CD4-positive, alpha-beta T cell (primary cell): ENCODE measurements at regions of chr17 and their contacts with region 1.

Region 1: GRCh38 chr17:45148183-45149036 is at the start of gene HEXIM1:
- DNase-seq: peak; percentile 98 to 100 (median 99)
- ATAC-seq: peak; percentile 78
- H3K4me3 ChIP-seq: peak within 1 kb of the TSS; percentile 94
- H3K4me3 Mint-ChIP-seq: peak within 1 kb of the TSS; percentile 94
- H3K27ac ChIP-seq: peak within 1 kb of the TSS; percentile 93 to 97
- H3K27ac Mint-ChIP-seq: peak within 1 kb of the TSS; percentile 99
- H3K4me1 ChIP-seq: peaks cover 71% of the 10 kb centered on the region
- H3K4me1 Mint-ChIP-seq: peaks cover 69% of the 10 kb centered on the region
- H3K27me3 ChIP-seq: no peaks in the 10 kb centered on the region
- H3K27me3 Mint-ChIP-seq: peaks cover 8% of the 10 kb centered on the region
- CTCF ChIP-seq: no peak
- total RNA-seq, gene HEXIM1: 50.5 to 50.9 TPM

Region 2: DNA sequence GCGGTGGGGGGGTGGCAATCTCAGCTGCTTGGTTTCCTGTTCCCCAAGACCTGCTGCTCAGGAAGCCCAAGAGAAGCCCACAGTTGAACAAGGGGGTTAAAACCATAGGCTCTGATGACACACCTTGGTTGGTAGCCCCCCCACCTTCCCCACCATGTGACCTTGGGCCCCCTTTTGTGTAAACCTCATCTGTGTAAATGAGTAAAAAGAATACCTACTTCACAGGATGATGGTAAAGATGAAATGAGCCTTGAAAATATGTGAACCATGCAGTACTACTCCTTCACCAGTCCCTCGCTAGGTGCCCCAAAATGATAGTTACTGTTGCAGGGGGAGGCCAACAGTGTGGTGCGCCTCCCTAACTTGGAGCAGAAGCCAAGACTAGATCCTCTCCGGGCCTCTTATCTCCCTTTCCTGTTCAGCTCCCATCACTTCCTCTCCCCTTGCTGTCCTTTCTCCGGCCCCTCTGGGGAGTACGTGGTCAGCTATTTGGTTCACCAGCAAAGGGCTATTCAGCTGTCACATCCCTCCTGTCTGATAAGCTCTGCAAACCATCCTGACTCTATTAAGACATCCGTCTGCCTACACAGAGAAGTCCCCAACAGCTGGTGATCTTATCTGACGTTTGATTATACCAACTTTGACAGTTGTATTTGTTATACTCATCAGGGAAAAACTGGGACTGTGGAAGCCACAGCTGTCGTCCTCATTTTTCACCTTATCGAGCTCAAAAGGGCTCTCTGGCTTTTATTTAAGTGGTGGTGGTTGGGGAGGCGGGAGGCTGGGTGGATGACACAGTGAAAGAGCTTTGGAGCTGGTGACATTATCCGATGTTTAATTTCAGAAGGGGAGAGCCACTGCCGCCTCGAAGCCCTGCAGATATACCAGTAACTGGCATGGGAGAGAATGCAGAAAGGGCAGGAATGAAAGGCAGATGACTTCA is 116.9 kb before region 1 on chr17:
- CTCF ChIA-PET with region 1: no interaction called
- POLR2A ChIA-PET with region 1: no interaction called
- intact Hi-C with region 1: no loop called
- DNase-seq: no peak
- ATAC-seq: no peak
- H3K4me3 ChIP-seq: no peak overlapping the region
- H3K4me3 Mint-ChIP-seq: no peak overlapping the region
- H3K27ac ChIP-seq: no peak overlapping the region
- H3K27ac Mint-ChIP-seq: no peak overlapping the region
- H3K4me1 ChIP-seq: no peaks in the 10 kb centered on the region
- H3K4me1 Mint-ChIP-seq: no peaks in the 10 kb centered on the region
- H3K27me3 ChIP-seq: no peaks in the 10 kb centered on the region
- H3K27me3 Mint-ChIP-seq: no peaks in the 10 kb centered on the region
- CTCF ChIP-seq: no peak

Region 3: DNA sequence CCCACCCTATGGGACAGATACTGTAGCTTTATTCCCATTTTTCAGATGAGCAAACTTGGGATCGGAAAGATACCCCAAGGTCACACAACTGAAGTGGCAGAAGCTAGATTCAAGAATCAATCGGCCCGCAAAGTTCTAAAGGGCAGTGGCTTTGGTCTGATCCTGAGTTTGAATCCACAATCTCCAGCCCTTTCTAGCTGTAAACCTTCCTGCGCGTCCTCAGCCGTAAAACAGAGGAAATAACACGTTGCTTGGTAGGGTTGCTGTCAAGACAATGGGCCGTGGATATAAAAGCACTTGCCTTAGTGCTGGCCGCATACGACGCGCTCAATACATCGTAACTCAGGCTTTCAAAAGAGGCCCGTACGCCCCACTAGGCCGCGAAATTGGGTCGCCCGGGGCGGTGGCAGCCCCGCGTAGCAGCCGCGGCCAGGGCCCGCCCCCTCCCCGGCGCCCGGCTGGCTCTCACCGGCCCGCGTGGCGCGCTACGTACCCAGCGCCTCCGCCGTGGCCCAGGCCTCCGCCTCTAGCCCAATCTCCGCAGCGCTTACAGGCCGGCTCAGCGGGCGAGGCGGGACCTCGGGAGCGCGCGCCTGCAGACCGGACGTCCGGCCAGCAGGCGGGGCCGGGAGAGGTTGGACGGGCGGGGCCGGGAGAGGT is 97.2 kb before region 1 on chr17 and contains the start of gene DCAKD:
- CTCF ChIA-PET with region 1: interaction called, 3 read pairs
- POLR2A ChIA-PET with region 1: interaction called, 10 read pairs
- intact Hi-C with region 1: loop called in 1 of 2 experiments (anchors 5 kb)
- DNase-seq: peak; percentile 75 to 98 (median 86)
- ATAC-seq: peak; percentile 85
- H3K4me3 ChIP-seq: peak within 1 kb of the TSS; percentile 82
- H3K4me3 Mint-ChIP-seq: peak within 1 kb of the TSS; percentile 88
- H3K27ac ChIP-seq: peak within 1 kb of the TSS; percentile 83 to 96
- H3K27ac Mint-ChIP-seq: peak within 1 kb of the TSS; percentile 96
- H3K4me1 ChIP-seq: peaks cover 43% of the 10 kb centered on the region
- H3K4me1 Mint-ChIP-seq: peaks cover 33% of the 10 kb centered on the region
- H3K27me3 ChIP-seq: no peaks in the 10 kb centered on the region
- H3K27me3 Mint-ChIP-seq: no peaks in the 10 kb centered on the region
- CTCF ChIP-seq: no peak
- total RNA-seq, gene DCAKD: 11.6 to 12.2 TPM

Region 4: GRCh38 chr17:45110668-45111611 is 37.5 kb before region 1 on chr17:
- CTCF ChIA-PET with region 1: no interaction called
- POLR2A ChIA-PET with region 1: no interaction called
- intact Hi-C with region 1: no loop called
- DNase-seq: no peak
- ATAC-seq: no peak
- H3K4me3 ChIP-seq: no peak overlapping the region
- H3K4me3 Mint-ChIP-seq: no peak overlapping the region
- H3K27ac ChIP-seq: no peak overlapping the region
- H3K27ac Mint-ChIP-seq: no peak overlapping the region
- H3K4me1 ChIP-seq: no peaks in the 10 kb centered on the region
- H3K4me1 Mint-ChIP-seq: no peaks in the 10 kb centered on the region
- H3K27me3 ChIP-seq: no peaks in the 10 kb centered on the region
- H3K27me3 Mint-ChIP-seq: no peaks in the 10 kb centered on the region
- CTCF ChIP-seq: no peak

Region 5: GRCh38 chr17:45161019-45161825 is 12.8 kb after region 1 on chr17:
- CTCF ChIA-PET with region 1: interaction called, 108 read pairs
- POLR2A ChIA-PET with region 1: interaction called, 630 read pairs
- intact Hi-C with region 1: loop called (anchors 1 kb)
- DNase-seq: peak; percentile 94 to 100 (median 98)
- ATAC-seq: peak; percentile 93
- H3K4me3 ChIP-seq: peak overlapping the region; percentile 97
- H3K4me3 Mint-ChIP-seq: peak overlapping the region; percentile 93
- H3K27ac ChIP-seq: peak overlapping the region; percentile 98 to 99
- H3K27ac Mint-ChIP-seq: peak overlapping the region; percentile 94
- H3K4me1 ChIP-seq: peaks cover 26% of the 10 kb centered on the region
- H3K4me1 Mint-ChIP-seq: peaks cover 37% of the 10 kb centered on the region
- H3K27me3 ChIP-seq: no peaks in the 10 kb centered on the region
- H3K27me3 Mint-ChIP-seq: no peaks in the 10 kb centered on the region
- CTCF ChIP-seq: no peak

Region 6: DNA sequence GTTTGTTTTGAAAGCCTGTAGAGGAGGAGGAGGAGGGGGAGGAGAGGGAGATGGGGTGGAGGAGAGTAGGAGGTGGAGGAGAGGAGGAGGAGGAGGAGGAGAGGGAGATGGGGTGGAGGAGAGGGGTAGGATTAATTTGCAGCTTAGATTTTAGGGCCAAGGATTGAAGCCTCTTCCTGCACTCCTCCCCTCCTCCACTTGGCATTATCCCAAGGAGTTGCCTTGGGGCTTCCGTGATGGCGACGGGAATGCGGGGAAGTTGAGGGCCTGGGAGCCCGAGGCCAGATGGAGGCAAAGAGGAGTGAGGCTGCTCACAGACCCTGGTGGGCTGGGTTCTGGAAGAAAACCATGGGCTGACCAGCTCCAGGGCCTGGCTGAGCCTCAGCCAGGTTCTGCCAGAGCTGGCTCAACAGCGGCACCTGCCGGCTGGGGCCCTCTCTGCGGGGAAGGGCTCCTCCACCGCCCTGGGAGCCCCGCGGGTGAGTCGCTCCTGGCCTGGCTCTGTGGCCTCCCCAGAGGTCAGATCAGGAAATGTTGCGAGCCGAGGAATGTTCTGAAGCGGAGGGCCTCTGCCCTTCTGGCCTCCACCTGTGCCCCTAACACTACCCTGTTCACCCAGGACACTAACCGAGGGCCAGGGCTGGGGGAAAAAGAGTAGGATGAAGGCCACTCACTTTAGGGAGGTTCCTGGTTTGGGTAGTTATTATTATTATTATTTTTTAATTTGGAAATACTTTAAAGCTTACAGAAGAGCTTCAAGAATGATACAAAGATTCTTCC is 49.3 kb after region 1 on chr17:
- CTCF ChIA-PET with region 1: interaction called, 79 read pairs
- POLR2A ChIA-PET with region 1: interaction called, 42 read pairs
- intact Hi-C with region 1: loop called in 1 of 2 experiments (anchors 2 kb)
- DNase-seq: peak; percentile 72 to 91 (median 84)
- ATAC-seq: peak; percentile 100
- H3K4me3 ChIP-seq: no peak overlapping the region
- H3K4me3 Mint-ChIP-seq: no peak overlapping the region
- H3K27ac ChIP-seq: no peak overlapping the region
- H3K27ac Mint-ChIP-seq: no peak overlapping the region
- H3K4me1 ChIP-seq: peaks cover 8% of the 10 kb centered on the region
- H3K4me1 Mint-ChIP-seq: peaks cover 3% of the 10 kb centered on the region
- H3K27me3 ChIP-seq: no peaks in the 10 kb centered on the region
- H3K27me3 Mint-ChIP-seq: no peaks in the 10 kb centered on the region
- CTCF ChIP-seq: peak; percentile 92